Ascending aorta (tissue), 2 donors: ENCODE measurements at regions of chrX and their contacts with region 1.

Region 1: GRCh38 chrX:130079824-130080406 is 30.4 kb downstream of the ELF4 start:
- DNase-seq: no peak
- H3K4me3 ChIP-seq: no peak overlapping the region
- H3K27ac ChIP-seq: no peak overlapping the region
- H3K4me1 ChIP-seq: peaks cover 0 to 6% of the 10 kb centered on the region in 2 donors
- H3K27me3 ChIP-seq: no peaks in the 10 kb centered on the region
- CTCF ChIP-seq: peak; percentile 53 to 71 (median 58)

Region 2: GRCh38 chrX:129957241-129958082 is 122.5 kb before region 1 on chrX:
- intact Hi-C with region 1: no loop called
- DNase-seq: peak in 1 of 2 donors; percentile 75
- H3K4me3 ChIP-seq: peak overlapping the region; percentile 45 to 63
- H3K27ac ChIP-seq: peak overlapping the region in 1 of 2 donors; percentile 40
- H3K4me1 ChIP-seq: no peaks in the 10 kb centered on the region
- H3K27me3 ChIP-seq: no peaks in the 10 kb centered on the region
- CTCF ChIP-seq: no peak

Region 3: GRCh38 chrX:130120746-130121504 is 41.0 kb after region 1 on chrX:
- intact Hi-C with region 1: loop called (anchors 1 kb)
- DNase-seq: peak in 1 of 2 donors; percentile 88
- H3K4me3 ChIP-seq: peak overlapping the region; percentile 36 to 56
- H3K27ac ChIP-seq: peak overlapping the region; percentile 71 to 72
- H3K4me1 ChIP-seq: peaks cover 0 to 3% of the 10 kb centered on the region in 2 donors
- H3K27me3 ChIP-seq: no peaks in the 10 kb centered on the region
- CTCF ChIP-seq: peak; percentile 53 to 78 (median 65)

Region 4: DNA sequence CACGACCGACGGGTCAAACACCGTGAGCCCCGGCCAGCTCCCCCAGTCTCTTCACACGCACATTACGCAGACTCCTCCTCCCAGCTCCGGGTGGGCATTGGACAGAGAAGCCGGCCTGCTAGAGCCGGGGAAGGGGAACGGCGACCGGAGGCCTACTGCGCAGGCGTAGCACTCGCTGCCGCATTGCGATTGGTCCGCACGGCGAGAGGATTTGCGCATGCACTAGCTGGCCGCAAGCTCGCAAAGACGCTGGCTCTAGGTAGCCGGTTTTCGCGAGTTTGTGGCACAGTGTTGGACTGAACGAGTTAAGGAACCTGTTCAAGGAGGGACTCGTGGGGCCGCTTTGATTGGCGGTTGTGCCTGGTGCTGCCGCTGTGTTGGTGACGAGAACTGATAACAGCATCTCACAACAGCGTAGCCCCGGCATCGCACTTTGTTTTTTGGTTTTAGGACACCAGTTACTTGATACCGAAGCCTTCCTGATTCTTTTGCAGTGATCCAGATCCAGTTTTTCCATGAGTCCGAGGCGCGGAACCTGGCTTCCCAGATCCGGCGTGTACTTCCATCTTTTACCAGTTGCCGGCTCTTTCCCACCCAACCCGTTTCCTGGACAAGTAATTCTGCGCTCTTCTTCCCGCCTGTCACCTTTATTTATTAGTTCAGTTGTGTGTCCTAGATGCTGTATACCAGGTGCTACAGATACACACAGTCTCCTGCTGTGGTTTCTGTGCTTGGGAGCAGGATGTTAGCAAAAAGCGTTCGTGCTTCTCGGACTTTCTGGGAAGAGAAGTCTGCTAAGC is 86.0 kb after region 1 on chrX and contains the start of gene AIFM1:
- intact Hi-C with region 1: loop called (anchors 5 kb)
- DNase-seq: peak; percentile 70 to 94
- H3K4me3 ChIP-seq: peak within 1 kb of the TSS; percentile 49 to 76
- H3K27ac ChIP-seq: peak within 1 kb of the TSS; percentile 62 to 82
- H3K4me1 ChIP-seq: no peaks in the 10 kb centered on the region
- H3K27me3 ChIP-seq: no peaks in the 10 kb centered on the region
- CTCF ChIP-seq: no peak
- total RNA-seq, gene AIFM1: 0.75 TPM

Region 5: DNA sequence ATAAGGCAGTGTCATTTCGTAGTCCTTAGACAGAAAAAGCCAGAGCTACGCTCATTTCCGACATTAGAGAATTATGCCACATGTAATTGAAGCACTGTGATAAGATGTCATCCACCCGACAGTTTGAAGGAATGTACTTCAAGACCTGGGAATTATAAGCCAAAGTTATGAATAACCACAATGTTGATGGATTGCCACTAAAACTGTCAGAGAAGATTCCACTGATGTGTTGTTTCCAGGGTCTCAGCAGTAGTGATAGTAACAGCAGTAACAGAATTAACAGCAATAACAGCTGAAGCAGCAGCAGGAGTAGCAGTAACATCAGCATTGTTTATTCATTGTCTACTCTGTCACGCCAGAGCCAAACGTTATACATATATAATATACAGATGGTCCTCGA is 116.6 kb after region 1 on chrX:
- intact Hi-C with region 1: loop called (anchors 1 kb)
- DNase-seq: no peak
- H3K4me3 ChIP-seq: no peak overlapping the region
- H3K27ac ChIP-seq: no peak overlapping the region
- H3K4me1 ChIP-seq: no peaks in the 10 kb centered on the region
- H3K27me3 ChIP-seq: no peaks in the 10 kb centered on the region
- CTCF ChIP-seq: no peak